ENCODE measurements at regions of chr16 and their contacts with region 1.

Region 1: DNA sequence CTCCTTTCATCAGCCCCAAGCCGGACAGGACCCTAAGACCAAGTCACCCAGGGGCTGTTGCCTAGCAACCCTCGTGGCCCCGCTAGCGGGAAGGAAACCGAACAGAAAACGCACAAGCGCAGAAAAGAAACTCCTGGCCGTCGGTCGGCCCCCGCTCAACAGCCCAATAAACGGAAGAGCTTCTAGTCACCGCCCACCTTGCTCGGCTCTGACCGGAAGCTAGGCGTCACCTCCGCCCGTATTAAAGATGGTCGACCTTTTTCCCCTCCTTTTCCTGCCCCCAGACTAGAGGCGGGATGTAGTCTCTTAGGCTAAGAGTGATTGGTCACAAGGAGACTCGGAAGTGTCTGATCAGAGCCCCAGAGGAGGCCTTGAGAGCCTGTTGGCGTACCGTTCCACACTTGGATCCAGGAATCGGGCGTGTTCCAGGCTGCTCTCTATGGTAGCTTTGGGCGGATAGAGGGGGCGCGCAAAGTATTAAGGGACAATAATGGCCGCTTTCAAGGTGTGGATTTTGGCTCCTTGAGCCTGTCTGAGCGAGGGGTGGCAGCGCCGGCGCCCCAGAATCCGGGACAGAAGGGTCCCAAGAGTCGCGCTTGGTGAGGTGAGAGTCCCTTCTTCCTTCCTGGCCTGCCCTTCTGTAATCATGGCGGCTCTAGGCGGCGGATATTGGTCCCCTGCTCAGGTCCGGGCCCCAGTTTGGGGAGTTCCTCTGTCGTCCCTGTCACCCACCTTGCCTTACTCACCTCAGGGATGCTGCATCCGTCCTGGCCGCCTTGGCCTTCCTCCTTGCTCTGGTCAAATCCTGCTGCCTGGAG is at the starts of genes DHX38 and TXNL4B:
- DNase-seq: peak; percentile 99
- ATAC-seq: peak; percentile 97
- H3K4me3 ChIP-seq: peak within 1 kb of the TSS; percentile 73 to 99
- H3K27ac ChIP-seq: peak within 1 kb of the TSS; percentile 65
- H3K4me1 ChIP-seq: peaks cover 6 to 15% of the 10 kb centered on the region in 2 experiments; a peak in 3 of 4 replicates
- H3K27me3 ChIP-seq: no peaks in the 10 kb centered on the region
- CTCF ChIP-seq: no peak
- POLR2A ChIP-seq: peak; percentile 68
- RAD21 ChIP-seq: no peak
- total RNA-seq, gene DHX38: 71.0 TPM
- total RNA-seq, gene TXNL4B: 15.5 TPM

Region 2: GRCh38 chr16:71564155-71564967 is 529.3 kb before region 1 on chr16:
- CTCF ChIA-PET with region 1: no interaction called
- POLR2A ChIA-PET with region 1: no interaction called
- RAD21 ChIA-PET with region 1: no interaction called
- intact Hi-C with region 1: loop called (anchors 10 kb)
- DNase-seq: no peak
- ATAC-seq: peak; percentile 6
- H3K4me3 ChIP-seq: peak overlapping the region; percentile 65 to 69
- H3K27ac ChIP-seq: peak overlapping the region; percentile 31; the same call in 1 of the 2 replicates
- H3K4me1 ChIP-seq: peaks cover 14 to 18% of the 10 kb centered on the region in 2 experiments
- H3K27me3 ChIP-seq: no peaks in the 10 kb centered on the region
- CTCF ChIP-seq: no peak
- POLR2A ChIP-seq: no peak
- RAD21 ChIP-seq: no peak

Region 3: GRCh38 chr16:71883849-71884638 is 209.6 kb before region 1 on chr16 and contains the start of gene ZNF821:
- CTCF ChIA-PET with region 1: no interaction called
- POLR2A ChIA-PET with region 1: no interaction called
- RAD21 ChIA-PET with region 1: no interaction called
- intact Hi-C with region 1: loop called (anchors 10 kb)
- DNase-seq: no peak
- ATAC-seq: peak; percentile 70
- H3K4me3 ChIP-seq: peak within 1 kb of the TSS; percentile 61 to 73
- H3K27ac ChIP-seq: peak within 1 kb of the TSS; percentile 79
- H3K4me1 ChIP-seq: peaks cover 14 to 18% of the 10 kb centered on the region in 2 experiments
- H3K27me3 ChIP-seq: no peaks in the 10 kb centered on the region
- CTCF ChIP-seq: peak in 1 of 3 experiments; percentile 21; a peak in 2 of 6 replicates
- POLR2A ChIP-seq: no peak
- RAD21 ChIP-seq: no peak
- total RNA-seq, gene ZNF821: 4.9 TPM

Region 4: DNA sequence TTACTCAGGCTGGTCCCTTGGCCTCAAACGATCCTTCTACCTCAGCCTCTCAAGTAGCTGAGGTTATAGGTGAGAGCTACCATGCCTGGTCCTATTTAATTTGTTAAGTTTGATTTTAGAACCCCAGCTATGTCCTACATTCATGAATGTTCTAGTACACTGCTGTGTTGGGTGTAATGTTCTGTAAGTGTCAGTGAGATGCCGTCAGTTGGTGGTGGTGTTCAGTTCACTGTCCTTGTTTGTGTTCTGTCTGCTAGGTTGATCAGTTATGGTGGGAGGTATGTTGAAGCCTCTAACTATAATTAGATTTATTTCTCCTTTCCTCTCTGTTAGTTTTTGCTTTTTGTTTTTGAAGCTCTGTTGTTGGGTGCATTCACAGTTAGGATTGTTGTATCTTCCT is 190.0 kb before region 1 on chr16:
- CTCF ChIA-PET with region 1: no interaction called
- POLR2A ChIA-PET with region 1: no interaction called
- RAD21 ChIA-PET with region 1: no interaction called
- intact Hi-C with region 1: no loop called
- DNase-seq: no peak
- ATAC-seq: no peak
- H3K4me3 ChIP-seq: no peak overlapping the region
- H3K27ac ChIP-seq: no peak overlapping the region
- H3K4me1 ChIP-seq: no peaks in the 10 kb centered on the region
- H3K27me3 ChIP-seq: no peaks in the 10 kb centered on the region
- CTCF ChIP-seq: no peak
- POLR2A ChIP-seq: no peak
- RAD21 ChIP-seq: no peak

Region 5: GRCh38 chr16:71954699-71955195 is 138.9 kb before region 1 on chr16:
- CTCF ChIA-PET with region 1: no interaction called
- POLR2A ChIA-PET with region 1: no interaction called
- RAD21 ChIA-PET with region 1: no interaction called
- intact Hi-C with region 1: no loop called
- DNase-seq: no peak
- ATAC-seq: no peak
- H3K4me3 ChIP-seq: no peak overlapping the region
- H3K27ac ChIP-seq: no peak overlapping the region
- H3K4me1 ChIP-seq: no peaks in the 10 kb centered on the region
- H3K27me3 ChIP-seq: no peaks in the 10 kb centered on the region
- CTCF ChIP-seq: no peak
- POLR2A ChIP-seq: no peak
- RAD21 ChIP-seq: no peak

Region 6: GRCh38 chr16:72008424-72009216 is 85.0 kb before region 1 on chr16 and contains the start of gene DHODH:
- CTCF ChIA-PET with region 1: no interaction called
- POLR2A ChIA-PET with region 1: no interaction called
- RAD21 ChIA-PET with region 1: no interaction called
- intact Hi-C with region 1: loop called (anchors 1 kb)
- DNase-seq: peak; percentile 94
- ATAC-seq: peak; percentile 99
- H3K4me3 ChIP-seq: peak within 1 kb of the TSS; percentile 99
- H3K27ac ChIP-seq: peak within 1 kb of the TSS; percentile 73
- H3K4me1 ChIP-seq: peaks cover 4 to 5% of the 10 kb centered on the region in 2 experiments; a peak in 3 of 4 replicates
- H3K27me3 ChIP-seq: no peaks in the 10 kb centered on the region
- CTCF ChIP-seq: no peak
- POLR2A ChIP-seq: peak; percentile 50
- RAD21 ChIP-seq: no peak
- total RNA-seq, gene DHODH: 22.1 TPM